ENCODE measurements at regions of chr1 and their contacts with region 1.

Region 1: GRCh38 chr1:17212487-17213121 is 7.7 kb downstream of the PADI1 start:
- DNase-seq: peak; percentile 90
- ATAC-seq: peak; percentile 64
- H3K4me3 Mint-ChIP-seq: peak overlapping the region; percentile 58
- H3K27ac Mint-ChIP-seq: peak overlapping the region; percentile 68
- H3K4me1 Mint-ChIP-seq: peaks cover 49% of the 10 kb centered on the region
- H3K27me3 Mint-ChIP-seq: peaks cover 60% of the 10 kb centered on the region

Region 2: DNA sequence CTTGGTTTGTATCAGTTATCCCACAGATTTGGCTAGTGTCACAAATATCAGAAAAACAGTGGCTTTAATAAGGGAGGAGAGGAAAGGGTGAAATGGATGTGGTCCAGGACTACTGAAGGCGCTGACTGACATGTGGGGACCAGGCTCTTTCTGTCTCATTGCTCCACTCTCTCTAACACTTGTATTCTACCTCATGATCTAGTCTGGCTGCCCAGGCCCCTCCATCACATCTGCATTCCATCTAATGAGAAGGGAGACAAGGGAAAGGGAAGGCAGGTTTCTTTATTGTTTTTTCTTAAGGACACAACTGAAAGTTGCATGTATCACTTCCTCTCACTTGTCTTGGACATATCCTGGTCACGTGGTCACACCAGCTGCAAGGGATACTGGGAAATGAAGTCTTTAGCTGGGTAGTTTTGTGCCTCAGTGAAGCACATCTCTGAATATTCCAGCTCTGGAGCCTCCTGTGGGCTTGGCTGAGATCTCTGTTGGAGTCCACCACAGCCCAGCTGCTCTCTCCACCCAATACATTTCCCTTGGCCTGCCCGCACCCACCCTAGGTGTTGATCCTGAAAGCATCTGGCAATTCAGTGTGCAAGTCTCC is 51.4 kb before region 1 on chr1:
- POLR2A ChIA-PET with region 1: no interaction called
- DNase-seq: no peak
- ATAC-seq: peak; percentile 58
- H3K4me3 Mint-ChIP-seq: peak overlapping the region; percentile 56
- H3K27ac Mint-ChIP-seq: peak overlapping the region; percentile 71
- H3K4me1 Mint-ChIP-seq: peaks cover 8% of the 10 kb centered on the region
- H3K27me3 Mint-ChIP-seq: peaks cover 7% of the 10 kb centered on the region

Region 3: GRCh38 chr1:17201201-17202021 is 11.2 kb before region 1 on chr1:
- POLR2A ChIA-PET with region 1: interaction called, 11 read pairs
- DNase-seq: peak; percentile 65
- ATAC-seq: peak; percentile 79
- H3K4me3 Mint-ChIP-seq: peak overlapping the region; percentile 72
- H3K27ac Mint-ChIP-seq: peak overlapping the region; percentile 79
- H3K4me1 Mint-ChIP-seq: peaks cover 41% of the 10 kb centered on the region
- H3K27me3 Mint-ChIP-seq: peaks cover 35% of the 10 kb centered on the region

Measured in activated naive CD8-positive, alpha-beta T cell treated with anti-CD3 and anti-CD28 coated beads, Interleukin-2, amount 10 ng/mL, durations not matched to agents 7 days and 5 days (primary cell).